K562 (cell line): ENCODE measurements at regions of chr2 and their contacts with region 1.

Region 1: GRCh38 chr2:9799665-9800632 is 43.3 kb upstream of the TAF1B start:
- DNase-seq: peak; percentile 87 to 91 (median 89)
- ATAC-seq: peak; percentile 95
- H3K4me3 ChIP-seq: no peak overlapping the region
- H3K27ac ChIP-seq: no peak overlapping the region
- H3K4me1 ChIP-seq: peaks cover 23 to 39% of the 10 kb centered on the region in 2 experiments
- H3K27me3 ChIP-seq: no peaks in the 10 kb centered on the region
- CTCF ChIP-seq: peak; percentile 98 to 99 (median 99)
- EP300 ChIP-seq: no peak; the same call in 1 of the 2 replicates
- POLR2A ChIP-seq: no peak
- RAD21 ChIP-seq: peak; percentile 95 to 97

Region 2: DNA sequence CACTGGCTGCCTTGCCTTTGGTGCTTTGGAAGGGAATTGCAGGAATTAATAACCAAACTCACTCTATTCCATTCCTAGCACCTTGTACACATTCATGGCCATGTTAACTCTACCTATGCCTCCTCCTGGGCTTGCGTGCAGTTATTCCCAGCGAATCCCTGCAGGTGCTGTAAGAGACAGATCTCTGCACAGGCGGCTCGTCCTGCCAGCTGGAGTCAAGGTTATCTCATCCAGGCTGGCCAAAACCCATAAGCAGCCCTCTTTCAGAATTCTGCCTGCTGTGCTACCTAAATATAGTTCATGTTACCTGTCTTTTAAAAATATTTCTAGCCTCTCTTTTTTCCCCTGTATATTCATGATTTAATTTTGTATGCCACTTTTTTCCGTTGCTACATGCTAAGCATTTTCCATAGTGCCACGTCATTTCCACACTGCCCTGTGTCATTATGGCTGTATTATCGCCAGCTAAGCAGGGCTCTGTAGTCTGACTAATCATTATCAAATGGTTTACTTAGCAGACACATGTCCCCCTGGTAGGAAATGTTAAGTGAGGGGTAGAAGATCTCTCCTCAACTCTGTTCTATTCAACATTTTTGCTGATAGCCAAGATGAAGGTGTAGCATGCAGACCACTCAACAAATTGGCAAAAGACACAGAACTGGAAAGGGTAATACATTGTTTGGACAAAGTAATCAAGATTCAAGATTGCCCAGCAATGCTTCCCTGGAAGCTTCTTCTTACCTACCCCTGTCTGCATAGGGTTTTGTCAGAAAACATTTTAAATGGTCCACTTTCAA is 36.4 kb before region 1 on chr2:
- CTCF ChIA-PET with region 1: no interaction called
- POLR2A ChIA-PET with region 1: no interaction called
- in situ Hi-C with region 1: no loop called
- intact Hi-C with region 1: no loop called
- DNase-seq: peak in 2 of 4 experiments; percentile 64 to 65
- ATAC-seq: peak; percentile 44
- H3K4me3 ChIP-seq: no peak overlapping the region
- H3K27ac ChIP-seq: peak overlapping the region; percentile 48; the same call in 2 of the 3 replicates
- H3K4me1 ChIP-seq: peaks cover 31 to 46% of the 10 kb centered on the region in 2 experiments
- H3K27me3 ChIP-seq: no peaks in the 10 kb centered on the region
- CTCF ChIP-seq: no peak
- EP300 ChIP-seq: peak; percentile 65; the same call in 1 of the 2 replicates
- POLR2A ChIP-seq: no peak
- RAD21 ChIP-seq: no peak

Region 3: GRCh38 chr2:9778012-9778411 is 21.9 kb before region 1 on chr2:
- CTCF ChIA-PET with region 1: no interaction called
- POLR2A ChIA-PET with region 1: interaction called, 4 read pairs
- in situ Hi-C with region 1: no loop called
- intact Hi-C with region 1: loop called (anchors 2 kb)
- DNase-seq: peak; percentile 38 to 53 (median 48)
- ATAC-seq: peak; percentile 78
- H3K4me3 ChIP-seq: no peak overlapping the region
- H3K27ac ChIP-seq: no peak overlapping the region
- H3K4me1 ChIP-seq: peaks cover 8 to 25% of the 10 kb centered on the region in 2 experiments; a peak in 4 of 5 replicates
- H3K27me3 ChIP-seq: peaks cover 0 to 4% of the 10 kb centered on the region in 2 experiments; a peak in 2 of 5 replicates
- CTCF ChIP-seq: peak; percentile 55 to 77 (median 60); a peak in 5 of 6 replicates
- EP300 ChIP-seq: no peak
- POLR2A ChIP-seq: no peak
- RAD21 ChIP-seq: peak in 1 of 2 experiments; percentile 50; a peak in 2 of 4 replicates

Region 4: DNA sequence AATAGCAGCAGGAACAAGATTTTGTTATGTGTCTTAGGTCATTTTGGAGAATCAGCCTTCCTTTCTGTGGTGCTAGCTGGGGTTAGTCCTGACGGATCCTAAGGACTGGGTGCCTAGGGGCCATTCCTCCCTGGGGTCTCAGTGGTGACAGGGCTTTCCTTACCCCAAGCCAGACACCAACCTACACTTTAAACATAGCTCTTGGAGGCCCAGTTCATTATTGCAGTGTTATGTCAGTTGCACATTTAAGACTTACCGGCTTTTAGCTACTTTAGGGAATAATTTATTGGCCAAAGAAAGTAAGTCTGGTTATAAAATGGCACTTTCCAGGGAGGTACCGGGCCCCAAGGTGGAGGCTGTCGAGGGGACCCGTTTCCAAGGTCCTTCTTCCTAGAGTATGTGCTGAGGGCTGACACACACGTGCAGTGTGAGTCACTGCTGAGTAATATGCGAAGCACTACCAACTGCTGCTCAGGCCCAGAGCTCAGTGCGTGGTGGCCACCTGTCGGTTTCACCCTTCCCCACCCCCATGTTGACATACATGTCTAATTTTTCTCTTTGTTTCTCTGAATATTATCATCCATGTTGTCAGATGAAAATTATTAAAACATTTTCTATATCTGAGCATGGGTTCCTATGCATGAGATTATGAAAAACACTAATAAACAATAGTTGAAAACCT is 114.6 kb after region 1 on chr2:
- CTCF ChIA-PET with region 1: interaction called, 11 read pairs
- POLR2A ChIA-PET with region 1: interaction called, 3 read pairs
- in situ Hi-C with region 1: no loop called
- intact Hi-C with region 1: loop called (anchors 1 kb)
- DNase-seq: peak; percentile 34 to 81 (median 52)
- ATAC-seq: peak; percentile 99
- H3K4me3 ChIP-seq: no peak overlapping the region
- H3K27ac ChIP-seq: peak overlapping the region; percentile 43; the same call in 2 of the 3 replicates
- H3K4me1 ChIP-seq: peaks cover 0 to 8% of the 10 kb centered on the region in 2 experiments; a peak in 3 of 5 replicates
- H3K27me3 ChIP-seq: no peaks in the 10 kb centered on the region
- CTCF ChIP-seq: peak; percentile 59 to 78 (median 61)
- EP300 ChIP-seq: peak; percentile 61
- POLR2A ChIP-seq: no peak
- RAD21 ChIP-seq: peak; percentile 85 to 89

Region 5: GRCh38 chr2:9975805-9976447 is 176.0 kb after region 1 on chr2:
- CTCF ChIA-PET with region 1: no interaction called
- POLR2A ChIA-PET with region 1: no interaction called
- in situ Hi-C with region 1: no loop called
- intact Hi-C with region 1: no loop called
- DNase-seq: peak; percentile 30 to 58 (median 35)
- ATAC-seq: 0 out of 3 replicates have a peak, but pooled peaks have one; percentile 25
- H3K4me3 ChIP-seq: no peak overlapping the region
- H3K27ac ChIP-seq: no peak overlapping the region
- H3K4me1 ChIP-seq: peaks cover 0 to 8% of the 10 kb centered on the region in 2 experiments; a peak in 3 of 5 replicates
- H3K27me3 ChIP-seq: no peaks in the 10 kb centered on the region
- CTCF ChIP-seq: no peak
- EP300 ChIP-seq: no peak
- POLR2A ChIP-seq: no peak
- RAD21 ChIP-seq: no peak

Region 6: GRCh38 chr2:10043906-10044601 is 244.1 kb after region 1 on chr2:
- CTCF ChIA-PET with region 1: interaction called, 11 read pairs
- POLR2A ChIA-PET with region 1: no interaction called
- in situ Hi-C with region 1: no loop called
- intact Hi-C with region 1: no loop called
- DNase-seq: peak; percentile 89 to 98 (median 94)
- ATAC-seq: peak; percentile 91
- H3K4me3 ChIP-seq: peak overlapping the region; percentile 61
- H3K27ac ChIP-seq: peak overlapping the region; percentile 99
- H3K4me1 ChIP-seq: peaks cover 7 to 59% of the 10 kb centered on the region in 2 experiments; a peak in 4 of 5 replicates
- H3K27me3 ChIP-seq: no peaks in the 10 kb centered on the region
- CTCF ChIP-seq: no peak
- EP300 ChIP-seq: peak; percentile 67
- POLR2A ChIP-seq: no peak
- RAD21 ChIP-seq: no peak

Region 7: GRCh38 chr2:10057231-10058107 is 257.5 kb after region 1 on chr2:
- CTCF ChIA-PET with region 1: no interaction called
- POLR2A ChIA-PET with region 1: interaction called, 5 read pairs
- in situ Hi-C with region 1: no loop called
- intact Hi-C with region 1: loop called (anchors 2 kb)
- DNase-seq: peak; percentile 85 to 91 (median 89)
- ATAC-seq: peak; percentile 87
- H3K4me3 ChIP-seq: peak overlapping the region; percentile 40
- H3K27ac ChIP-seq: peak overlapping the region; percentile 42; the same call in 2 of the 3 replicates
- H3K4me1 ChIP-seq: peaks cover 11 to 50% of the 10 kb centered on the region in 2 experiments
- H3K27me3 ChIP-seq: no peaks in the 10 kb centered on the region
- CTCF ChIP-seq: no peak
- EP300 ChIP-seq: peak; percentile 45
- POLR2A ChIP-seq: peak; percentile 46; the same call in 1 of the 2 replicates
- RAD21 ChIP-seq: 0 out of 4 replicates have a peak, but pooled peaks of 1 of the 2 experiments have one; percentile 1

Region 8: DNA sequence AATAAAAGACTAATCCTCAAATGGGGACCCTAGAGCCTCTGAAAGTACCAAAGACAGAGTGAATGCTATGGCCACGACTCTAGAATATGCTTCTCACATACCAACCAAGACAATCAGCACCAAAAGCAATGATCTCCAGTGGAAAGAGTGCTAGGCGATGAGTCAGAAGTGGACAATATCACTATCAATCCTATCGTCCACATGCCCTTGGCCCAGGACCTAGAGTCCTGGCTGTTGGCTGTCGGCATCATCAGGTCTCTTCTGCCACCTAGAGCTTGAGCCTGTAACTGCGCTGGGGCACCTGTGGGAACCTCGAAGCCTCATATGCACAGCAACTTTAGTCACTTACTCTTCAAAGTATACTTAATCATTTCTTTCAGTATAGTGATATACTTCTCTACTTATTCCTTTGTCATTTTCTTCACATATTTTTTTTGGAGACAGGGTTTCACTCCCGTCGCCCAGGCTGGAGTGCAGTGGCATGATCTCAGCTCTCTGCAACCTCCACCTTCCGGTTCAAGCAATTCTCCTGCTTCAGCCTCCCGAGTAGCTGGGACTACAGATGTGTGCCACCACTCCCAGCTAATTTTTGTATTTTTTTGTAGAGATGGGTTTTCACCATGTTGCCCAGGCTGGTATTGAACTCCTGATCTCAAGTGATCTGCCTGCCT is 860.1 kb after region 1 on chr2:
- CTCF ChIA-PET with region 1: no interaction called
- POLR2A ChIA-PET with region 1: no interaction called
- in situ Hi-C with region 1: loop called (anchors 25 kb)
- intact Hi-C with region 1: no loop called
- DNase-seq: peak; percentile 55 to 76 (median 67)
- ATAC-seq: peak; percentile 98
- H3K4me3 ChIP-seq: no peak overlapping the region
- H3K27ac ChIP-seq: no peak overlapping the region
- H3K4me1 ChIP-seq: peaks cover 0 to 3% of the 10 kb centered on the region in 2 experiments; a peak in 1 of 5 replicates
- H3K27me3 ChIP-seq: no peaks in the 10 kb centered on the region
- CTCF ChIP-seq: peak; percentile 68 to 93 (median 83)
- EP300 ChIP-seq: no peak
- POLR2A ChIP-seq: no peak
- RAD21 ChIP-seq: peak; percentile 83 to 89